ENCODE measurements at regions of chr4 and their contacts with region 1.

Region 1: GRCh38 chr4:38319456-38320342 is 344.3 kb upstream of the KLF3 start:
- DNase-seq: peak; percentile 94
- ATAC-seq: peak; percentile 72
- H3K4me3 ChIP-seq: peak overlapping the region; percentile 43; the same call in 1 of the 2 replicates
- H3K27ac ChIP-seq: peak overlapping the region; percentile 82
- H3K4me1 ChIP-seq: peaks cover 29% of the 10 kb centered on the region
- H3K27me3 ChIP-seq: no peaks in the 10 kb centered on the region
- CTCF ChIP-seq: peak; percentile 86

Region 2: GRCh38 chr4:38062088-38062893 is 257.4 kb before region 1 on chr4:
- CTCF ChIA-PET with region 1: no interaction called
- POLR2A ChIA-PET with region 1: no interaction called
- intact Hi-C with region 1: loop called (anchors 5 kb)
- DNase-seq: peak; percentile 73
- ATAC-seq: peak; percentile 67
- H3K4me3 ChIP-seq: no peak overlapping the region
- H3K27ac ChIP-seq: no peak overlapping the region
- H3K4me1 ChIP-seq: no peaks in the 10 kb centered on the region
- H3K27me3 ChIP-seq: no peaks in the 10 kb centered on the region
- CTCF ChIP-seq: peak; percentile 79

Region 3: GRCh38 chr4:38179690-38180377 is 139.9 kb before region 1 on chr4:
- CTCF ChIA-PET with region 1: interaction called, 24 read pairs
- POLR2A ChIA-PET with region 1: no interaction called
- intact Hi-C with region 1: loop called (anchors 2 kb)
- DNase-seq: peak; percentile 78
- ATAC-seq: peak; percentile 86
- H3K4me3 ChIP-seq: no peak overlapping the region
- H3K27ac ChIP-seq: peak overlapping the region; percentile 72
- H3K4me1 ChIP-seq: peaks cover 15% of the 10 kb centered on the region
- H3K27me3 ChIP-seq: no peaks in the 10 kb centered on the region
- CTCF ChIP-seq: peak; percentile 90

Region 4: DNA sequence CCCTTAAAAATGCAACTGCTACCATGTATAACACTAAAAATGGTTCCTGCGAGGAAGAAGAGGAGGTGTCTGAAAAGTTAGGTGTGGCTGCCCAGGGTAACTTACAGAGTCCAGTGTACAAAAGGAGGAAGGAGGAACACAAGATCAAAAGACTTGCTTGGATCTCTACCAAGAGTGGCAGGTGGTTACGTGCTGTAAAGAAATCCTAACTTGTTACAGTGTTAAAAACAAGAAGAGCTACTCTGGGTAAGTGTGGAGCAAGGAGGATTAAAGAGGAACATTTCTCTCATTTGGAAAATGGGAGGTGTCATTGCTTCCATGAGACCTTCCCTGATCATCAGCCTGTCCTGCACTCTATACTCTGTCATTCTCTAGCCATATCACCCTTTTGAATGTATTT is 117.5 kb before region 1 on chr4:
- CTCF ChIA-PET with region 1: no interaction called
- POLR2A ChIA-PET with region 1: no interaction called
- intact Hi-C with region 1: no loop called
- DNase-seq: no peak
- ATAC-seq: no peak
- H3K4me3 ChIP-seq: no peak overlapping the region
- H3K27ac ChIP-seq: no peak overlapping the region
- H3K4me1 ChIP-seq: no peaks in the 10 kb centered on the region
- H3K27me3 ChIP-seq: no peaks in the 10 kb centered on the region
- CTCF ChIP-seq: no peak

Region 5: GRCh38 chr4:38620790-38621684 is 301.3 kb after region 1 on chr4:
- CTCF ChIA-PET with region 1: no interaction called
- POLR2A ChIA-PET with region 1: no interaction called
- intact Hi-C with region 1: loop called (anchors 1 kb)
- DNase-seq: peak; percentile 91
- ATAC-seq: peak; percentile 92
- H3K4me3 ChIP-seq: peak overlapping the region; percentile 42; the same call in 1 of the 2 replicates
- H3K27ac ChIP-seq: peak overlapping the region; percentile 87
- H3K4me1 ChIP-seq: peaks cover 23% of the 10 kb centered on the region
- H3K27me3 ChIP-seq: no peaks in the 10 kb centered on the region
- CTCF ChIP-seq: no peak

Region 6: GRCh38 chr4:38663801-38664705 is 344.4 kb after region 1 on chr4 and contains the start of gene KLF3:
- CTCF ChIA-PET with region 1: interaction called, 3 read pairs
- POLR2A ChIA-PET with region 1: interaction called, 3 read pairs
- intact Hi-C with region 1: loop called (anchors 1 kb)
- DNase-seq: peak; percentile 77
- ATAC-seq: peak; percentile 75
- H3K4me3 ChIP-seq: peak within 1 kb of the TSS; percentile 87
- H3K27ac ChIP-seq: peak within 1 kb of the TSS; percentile 81
- H3K4me1 ChIP-seq: peaks cover 25% of the 10 kb centered on the region
- H3K27me3 ChIP-seq: no peaks in the 10 kb centered on the region
- CTCF ChIP-seq: no peak
- total RNA-seq, gene KLF3: 12.4 and 14.6 TPM in 2 replicates

Region 7: DNA sequence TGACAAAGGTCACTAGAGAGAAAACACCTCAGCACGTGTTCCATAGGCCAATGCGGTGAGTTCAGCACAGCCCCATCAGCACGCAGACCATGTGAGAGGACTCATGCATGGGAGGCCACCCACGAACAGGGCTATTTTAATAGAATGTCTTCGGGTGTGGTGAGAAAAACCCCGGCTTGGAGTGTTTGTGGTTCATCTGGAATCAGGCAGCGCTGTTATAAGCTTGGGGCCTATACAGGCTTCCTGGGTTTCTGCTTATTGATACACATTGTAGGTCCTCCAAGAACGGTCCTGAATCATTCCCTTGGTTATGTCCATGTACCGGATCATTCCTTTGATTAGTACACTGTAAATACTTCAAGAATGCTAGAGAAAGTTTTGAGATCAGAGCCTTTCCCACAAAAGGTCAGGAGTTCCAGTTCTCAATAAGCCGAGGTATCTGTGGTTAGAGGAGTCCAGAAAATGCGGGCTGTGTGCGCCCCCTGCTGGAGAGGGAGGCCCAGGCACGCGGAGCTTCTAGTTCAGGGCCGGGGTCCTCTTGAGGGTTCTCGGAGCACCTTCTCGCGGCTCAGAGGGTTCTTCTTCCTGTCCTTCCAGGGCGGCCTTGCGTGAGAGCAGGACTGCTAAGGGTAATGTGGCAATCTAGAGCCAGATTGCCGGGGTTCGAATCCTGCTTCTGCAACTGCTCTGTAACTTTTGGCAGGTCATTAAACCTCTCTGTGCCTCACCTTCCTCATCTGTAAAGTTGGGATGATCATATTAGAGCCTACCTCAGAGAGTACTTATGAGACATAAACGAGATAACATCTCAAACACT is 411.3 kb after region 1 on chr4:
- CTCF ChIA-PET with region 1: no interaction called
- POLR2A ChIA-PET with region 1: no interaction called
- intact Hi-C with region 1: loop called (anchors 1 kb)
- DNase-seq: peak; percentile 73
- ATAC-seq: peak; percentile 67
- H3K4me3 ChIP-seq: no peak overlapping the region
- H3K27ac ChIP-seq: no peak overlapping the region
- H3K4me1 ChIP-seq: peaks cover 18% of the 10 kb centered on the region
- H3K27me3 ChIP-seq: no peaks in the 10 kb centered on the region
- CTCF ChIP-seq: peak; percentile 94